Prostate gland (tissue), 2 donors: ENCODE measurements at regions of chr12 and their contacts with region 1.

Region 1: GRCh38 chr12:106247674-106248311 is at the start of gene CKAP4:
- DNase-seq: peak; percentile 69
- H3K4me3 ChIP-seq: peak within 1 kb of the TSS; percentile 83 to 93
- H3K27ac ChIP-seq: peak within 1 kb of the TSS; percentile 96
- H3K4me1 ChIP-seq: peaks cover 8% of the 10 kb centered on the region
- H3K27me3 ChIP-seq: no peaks in the 10 kb centered on the region
- CTCF ChIP-seq: no peak
- POLR2A ChIP-seq: peak; percentile 58
- total RNA-seq, gene CKAP4: 56.1 to 91.7 TPM

Region 2: DNA sequence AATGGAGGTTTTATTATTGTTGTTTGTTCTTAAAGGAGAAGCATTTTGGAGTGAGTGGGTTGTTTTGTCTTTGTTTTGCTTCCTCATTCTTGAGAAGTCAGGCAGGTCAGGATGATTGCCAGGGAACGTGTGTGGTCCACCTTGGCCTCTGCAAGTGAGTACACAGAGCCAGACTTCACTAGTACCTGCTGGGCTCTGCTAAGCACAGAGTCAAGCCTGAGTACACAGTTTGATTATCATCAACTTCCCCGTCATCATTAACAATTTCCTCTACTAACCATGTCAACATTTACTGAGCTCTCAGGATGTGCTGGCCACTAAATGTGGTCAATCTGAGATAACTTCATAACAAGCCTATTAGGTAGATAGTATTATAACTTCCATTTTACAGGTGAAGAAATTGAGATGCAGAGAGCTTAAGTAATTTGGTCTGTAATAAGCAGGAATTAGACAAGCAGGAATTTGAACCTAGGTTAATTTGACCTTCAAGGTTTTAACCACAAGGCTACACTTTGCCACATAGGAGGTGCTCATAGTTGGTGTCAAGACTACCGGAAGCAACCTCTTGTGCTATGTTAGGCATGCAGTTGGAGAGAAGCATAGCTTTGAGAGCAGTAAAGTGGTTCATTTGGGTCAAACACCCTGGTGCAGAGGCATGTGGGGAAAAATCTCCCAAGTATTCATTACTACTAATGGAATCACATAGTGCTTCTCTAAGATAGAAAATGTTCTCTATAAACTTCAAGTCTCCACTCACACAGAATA is 287.3 kb before region 1 on chr12:
- intact Hi-C with region 1: no loop called
- DNase-seq: peak; percentile 64
- H3K4me3 ChIP-seq: no peak overlapping the region
- H3K27ac ChIP-seq: no peak overlapping the region
- H3K4me1 ChIP-seq: no peaks in the 10 kb centered on the region
- H3K27me3 ChIP-seq: no peaks in the 10 kb centered on the region
- CTCF ChIP-seq: no peak
- POLR2A ChIP-seq: no peak

Region 3: DNA sequence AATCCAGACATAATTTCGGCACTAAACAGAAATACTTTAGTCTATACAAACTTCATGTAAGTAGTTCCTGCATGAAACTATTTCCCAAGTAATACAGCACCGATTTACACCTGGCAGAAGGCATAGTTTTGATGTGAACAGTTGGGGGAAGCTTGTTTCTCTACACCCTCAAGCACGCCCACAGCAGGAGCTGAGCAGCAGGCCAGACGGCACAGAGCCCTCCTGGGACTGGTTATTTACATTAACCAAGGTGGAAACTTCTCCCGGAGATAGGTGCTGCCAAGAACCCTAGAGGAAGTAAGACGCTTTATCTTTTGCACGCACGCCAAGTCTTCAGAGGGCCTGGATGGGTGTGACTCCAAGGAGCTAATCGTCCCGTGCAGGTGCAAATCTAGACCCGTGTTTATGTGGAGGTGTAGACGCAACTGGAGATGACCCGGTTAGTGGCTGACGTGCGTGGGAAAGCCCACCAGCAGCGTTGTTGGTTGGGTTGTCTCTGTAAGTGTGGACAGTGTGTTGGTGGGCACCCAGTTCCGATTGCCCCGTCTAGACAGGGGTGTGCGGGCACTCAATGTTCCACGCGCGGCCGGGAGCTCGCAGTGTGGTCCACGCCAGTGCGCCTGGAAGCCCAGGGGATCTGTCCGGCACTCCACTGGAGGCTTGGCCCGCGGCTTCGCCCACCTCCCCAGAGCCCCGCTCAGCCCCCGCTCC is 54.0 kb after region 1 on chr12:
- intact Hi-C with region 1: loop called (anchors 1 kb)
- DNase-seq: peak; percentile 77
- H3K4me3 ChIP-seq: peak overlapping the region; percentile 93 to 97
- H3K27ac ChIP-seq: peak overlapping the region; percentile 95 to 96
- H3K4me1 ChIP-seq: no peaks in the 10 kb centered on the region
- H3K27me3 ChIP-seq: no peaks in the 10 kb centered on the region
- CTCF ChIP-seq: peak in 2 of 4 experiments; percentile 6 to 15
- POLR2A ChIP-seq: no peak

Region 4: GRCh38 chr12:106357549-106358395 is 110.0 kb after region 1 on chr12 and contains the start of gene POLR3B:
- intact Hi-C with region 1: loop called (anchors 1 kb)
- DNase-seq: peak; percentile 94
- H3K4me3 ChIP-seq: peak within 1 kb of the TSS; percentile 51 to 81
- H3K27ac ChIP-seq: peak within 1 kb of the TSS; percentile 84 to 92
- H3K4me1 ChIP-seq: peaks cover 5% of the 10 kb centered on the region
- H3K27me3 ChIP-seq: no peaks in the 10 kb centered on the region
- CTCF ChIP-seq: peak; percentile 67 to 91 (median 90)
- POLR2A ChIP-seq: peak; percentile 75
- total RNA-seq, gene POLR3B: 8.6 to 9.5 TPM